ENCODE measurements at regions of chr16 and their contacts with region 1.

Region 1: GRCh38 chr16:15757630-15758251 is 99.1 kb downstream of the MYH11 start:
- DNase-seq: no peak
- ATAC-seq: no peak
- H3K4me3 ChIP-seq: no peak overlapping the region
- H3K27ac ChIP-seq: no peak overlapping the region
- H3K4me1 ChIP-seq: no peaks in the 10 kb centered on the region
- H3K27me3 ChIP-seq: no peaks in the 10 kb centered on the region
- CTCF ChIP-seq: no peak

Region 2: DNA sequence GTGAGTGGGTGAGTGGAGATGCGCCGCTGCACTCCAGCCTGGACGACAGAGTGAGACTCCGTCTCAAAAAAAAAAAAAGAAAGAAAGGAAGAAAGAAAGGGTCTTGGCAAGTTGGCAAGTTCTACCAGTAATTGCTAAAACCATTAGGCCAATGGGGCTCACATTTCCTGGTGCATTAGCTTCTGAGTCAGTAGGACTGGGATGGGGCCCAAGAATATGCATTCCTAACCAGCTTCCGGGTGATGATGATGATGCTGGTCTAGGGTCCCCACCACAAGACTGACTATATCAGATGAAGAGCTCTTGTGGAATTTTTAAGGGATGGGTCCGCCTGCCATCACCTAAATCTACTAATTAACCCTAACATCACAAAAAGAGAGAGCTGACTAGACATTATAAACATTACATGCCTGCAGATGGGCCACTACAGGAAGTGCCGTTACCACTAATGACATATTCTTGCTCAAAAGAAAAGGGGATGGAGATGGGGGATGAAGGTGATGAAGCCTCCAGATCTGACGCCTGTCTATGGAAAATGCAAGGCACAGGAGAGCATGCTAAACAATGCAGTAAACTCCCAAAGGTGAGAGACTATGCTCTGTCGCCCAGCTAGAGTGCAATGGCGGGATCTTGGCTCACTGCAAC is 86.0 kb after region 1 on chr16:
- CTCF ChIA-PET with region 1: no interaction called
- POLR2A ChIA-PET with region 1: no interaction called
- intact Hi-C with region 1: no loop called
- DNase-seq: no peak
- ATAC-seq: no peak
- H3K4me3 ChIP-seq: no peak overlapping the region
- H3K27ac ChIP-seq: no peak overlapping the region
- H3K4me1 ChIP-seq: no peaks in the 10 kb centered on the region
- H3K27me3 ChIP-seq: no peaks in the 10 kb centered on the region
- CTCF ChIP-seq: no peak

Region 3: GRCh38 chr16:15865742-15866141 is 108.0 kb after region 1 on chr16:
- CTCF ChIA-PET with region 1: no interaction called
- POLR2A ChIA-PET with region 1: no interaction called
- intact Hi-C with region 1: no loop called
- DNase-seq: no peak
- ATAC-seq: no peak
- H3K4me3 ChIP-seq: no peak overlapping the region
- H3K27ac ChIP-seq: no peak overlapping the region
- H3K4me1 ChIP-seq: no peaks in the 10 kb centered on the region
- H3K27me3 ChIP-seq: no peaks in the 10 kb centered on the region
- CTCF ChIP-seq: no peak

Region 4: DNA sequence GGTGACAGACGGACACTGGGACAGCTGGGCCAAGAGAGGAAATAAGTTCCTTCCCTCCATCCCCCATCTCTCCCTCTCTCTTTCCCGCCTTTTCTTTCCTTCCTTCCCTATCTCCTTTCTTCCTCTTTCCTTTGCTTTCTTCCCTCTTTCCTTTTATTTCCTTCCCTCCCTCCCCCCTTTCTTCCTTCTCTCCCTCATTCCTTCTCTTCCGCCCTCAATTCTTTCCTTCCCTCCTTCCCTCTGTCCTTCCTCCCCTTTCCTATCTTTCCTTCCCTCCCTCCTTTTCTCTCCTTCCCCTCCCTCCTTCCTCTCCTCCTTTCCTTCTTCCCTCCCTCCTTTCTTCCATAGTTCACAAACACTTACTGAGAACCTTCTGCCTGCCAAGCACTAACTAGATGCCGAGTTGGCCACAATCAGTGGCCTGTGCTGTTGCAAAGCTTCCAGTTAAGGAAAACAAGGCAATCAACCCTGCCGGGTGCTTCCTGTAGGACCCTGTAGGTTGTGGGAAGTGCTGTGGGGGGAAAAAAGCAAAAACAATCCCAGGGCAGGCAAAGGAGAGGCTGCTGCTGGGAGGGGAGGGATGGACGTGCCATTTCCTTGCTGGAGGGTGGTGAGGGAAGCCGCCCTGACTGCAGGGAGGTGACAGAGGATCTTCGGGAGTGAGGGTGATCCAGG is 433.9 kb after region 1 on chr16:
- CTCF ChIA-PET with region 1: no interaction called
- POLR2A ChIA-PET with region 1: no interaction called
- intact Hi-C with region 1: loop called (anchors 5 kb)
- DNase-seq: no peak
- ATAC-seq: no peak
- H3K4me3 ChIP-seq: no peak overlapping the region
- H3K27ac ChIP-seq: no peak overlapping the region
- H3K4me1 ChIP-seq: no peaks in the 10 kb centered on the region
- H3K27me3 ChIP-seq: no peaks in the 10 kb centered on the region
- CTCF ChIP-seq: no peak